Gastrocnemius medialis (tissue), 4 donors: ENCODE measurements at regions of chr12 and their contacts with region 1.

Region 1: GRCh38 chr12:70719672-70720420 is 82.6 kb upstream of the PTPRB start:
- DNase-seq: peak in 1 of 2 donors; percentile 13
- ATAC-seq: peak; percentile 32 to 37
- H3K4me3 ChIP-seq: peak overlapping the region; percentile 17 to 32 (median 26)
- H3K27ac ChIP-seq: peak overlapping the region; percentile 39 to 68 (median 52)
- H3K4me1 ChIP-seq: peaks cover 0 to 6% of the 10 kb centered on the region in 2 donors
- H3K27me3 ChIP-seq: no peaks in the 10 kb centered on the region
- CTCF ChIP-seq: peak; percentile 61 to 83 (median 70)
- POLR2A ChIP-seq: no peak

Region 2: GRCh38 chr12:69879041-69879960 is 840.5 kb before region 1 on chr12:
- in situ Hi-C with region 1: loop called (anchors 10 to 25 kb)
- intact Hi-C with region 1: loop called (anchors 5 kb)
- DNase-seq: peak; percentile 34 to 42
- ATAC-seq: peak; percentile 87 to 88
- H3K4me3 ChIP-seq: peak overlapping the region in 3 of 4 donors; percentile 24 to 48 (median 29)
- H3K27ac ChIP-seq: no peak overlapping the region
- H3K4me1 ChIP-seq: peaks cover 0 to 4% of the 10 kb centered on the region in 2 donors
- H3K27me3 ChIP-seq: no peaks in the 10 kb centered on the region
- CTCF ChIP-seq: peak; percentile 59 to 88 (median 80)
- POLR2A ChIP-seq: no peak

Region 3: GRCh38 chr12:70590051-70590450 is 129.8 kb before region 1 on chr12:
- in situ Hi-C with region 1: loop called (anchors 5 to 10 kb)
- intact Hi-C with region 1: loop called (anchors 1 kb)
- DNase-seq: peak; percentile 9 to 24
- ATAC-seq: peak in 1 of 2 donors; percentile 42
- H3K4me3 ChIP-seq: no peak overlapping the region
- H3K27ac ChIP-seq: peak overlapping the region in 1 of 4 donors; percentile 7
- H3K4me1 ChIP-seq: peaks cover 0 to 3% of the 10 kb centered on the region in 2 donors
- H3K27me3 ChIP-seq: no peaks in the 10 kb centered on the region
- CTCF ChIP-seq: peak in 4 of 5 experiments; percentile 55 to 71 (median 68)
- POLR2A ChIP-seq: no peak

Region 4: GRCh38 chr12:71469258-71470016 is 749.6 kb after region 1 on chr12:
- in situ Hi-C with region 1: no loop called
- intact Hi-C with region 1: no loop called
- DNase-seq: peak in 1 of 2 donors; percentile 29
- ATAC-seq: no peak
- H3K4me3 ChIP-seq: no peak overlapping the region
- H3K27ac ChIP-seq: peak overlapping the region; percentile 5 to 36 (median 23)
- H3K4me1 ChIP-seq: peaks cover 4 to 6% of the 10 kb centered on the region in 2 donors
- H3K27me3 ChIP-seq: no peaks in the 10 kb centered on the region
- CTCF ChIP-seq: no peak
- POLR2A ChIP-seq: no peak